Right ventricle myocardium inferior (tissue), 1 donor: ENCODE measurements at regions of chr12 and their contacts with region 1.

Region 1: DNA sequence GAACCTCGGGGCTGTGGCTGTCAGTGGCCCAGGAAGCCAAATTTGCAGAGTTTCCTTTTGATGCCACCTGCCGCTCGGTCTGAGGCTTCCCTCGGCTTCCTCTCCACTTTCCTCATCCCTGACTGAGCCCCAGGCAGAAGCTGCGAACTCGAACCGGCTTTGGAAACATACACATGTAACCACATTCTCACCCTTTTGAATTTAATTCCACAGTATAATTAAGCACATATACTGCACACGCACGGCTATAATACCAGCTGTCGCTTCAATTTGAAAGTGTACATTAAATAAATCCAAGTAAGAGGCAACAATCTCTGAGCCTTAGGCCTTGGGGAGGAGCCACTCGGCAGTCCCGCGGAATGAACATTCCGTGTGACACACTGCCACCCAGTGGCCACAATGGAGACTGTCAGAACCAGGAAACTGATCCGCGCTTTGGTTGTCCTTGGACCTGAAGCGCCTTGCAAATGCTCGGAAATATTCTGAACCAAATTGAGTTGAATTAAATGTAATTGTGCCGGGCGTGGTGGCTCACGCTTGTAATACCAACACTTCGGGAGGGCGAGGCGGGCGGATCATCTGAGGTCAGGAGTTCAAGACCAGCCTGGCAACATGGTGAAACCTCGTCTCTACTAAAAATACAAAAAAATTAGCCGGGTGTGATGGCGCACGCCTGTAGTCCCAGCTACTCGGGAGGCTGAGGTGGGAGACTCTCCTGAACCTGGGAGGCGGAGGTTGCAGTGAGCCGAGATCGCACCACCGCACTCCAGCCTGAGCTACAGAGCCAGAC is 117.9 kb upstream of the TMPO start:
- DNase-seq: peak; percentile 86
- ATAC-seq: peak; percentile 97

Region 2: GRCh38 chr12:97148941-97149559 is 1248.5 kb before region 1 on chr12:
- intact Hi-C with region 1: loop called (anchors 5 kb)
- DNase-seq: peak; percentile 55
- ATAC-seq: no peak

Region 3: DNA sequence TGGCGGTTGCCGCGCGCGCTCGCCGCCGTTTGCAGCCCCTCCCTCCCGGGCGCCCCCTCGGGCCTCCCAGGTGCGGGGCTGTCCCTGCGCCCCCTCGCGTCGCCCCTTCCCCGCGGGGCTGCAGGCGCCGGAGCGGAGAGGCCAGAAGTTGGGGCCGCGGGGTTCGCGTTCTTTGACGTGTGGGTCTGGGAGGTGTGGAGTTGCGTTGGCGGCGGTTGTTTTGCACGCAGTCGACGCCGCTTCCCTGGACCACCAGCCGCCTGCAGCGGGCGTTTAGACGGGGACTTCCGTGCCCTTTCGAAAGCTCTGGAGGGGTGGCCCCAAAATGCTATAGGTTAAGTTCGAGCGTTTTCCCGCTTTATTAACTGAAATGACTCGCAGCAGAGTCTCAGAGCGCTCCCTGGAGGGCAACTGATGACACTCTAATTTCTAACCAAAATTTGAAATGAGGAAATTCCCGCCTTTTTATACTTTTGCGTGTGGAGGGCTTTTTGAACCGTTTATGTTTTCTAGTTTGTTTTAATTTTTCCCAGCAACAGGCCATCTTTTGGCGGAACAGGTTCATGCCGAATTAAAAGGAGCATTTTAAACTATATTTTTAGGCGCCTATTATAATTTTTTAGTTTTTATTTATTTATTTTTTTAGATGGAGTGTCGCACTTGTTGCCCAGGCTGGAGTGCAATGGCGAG is 118.8 kb after region 1 on chr12:
- intact Hi-C with region 1: no loop called
- DNase-seq: peak; percentile 78
- ATAC-seq: peak; percentile 40